ENCODE measurements at regions of chr3 and their contacts with region 1.

Region 1: DNA sequence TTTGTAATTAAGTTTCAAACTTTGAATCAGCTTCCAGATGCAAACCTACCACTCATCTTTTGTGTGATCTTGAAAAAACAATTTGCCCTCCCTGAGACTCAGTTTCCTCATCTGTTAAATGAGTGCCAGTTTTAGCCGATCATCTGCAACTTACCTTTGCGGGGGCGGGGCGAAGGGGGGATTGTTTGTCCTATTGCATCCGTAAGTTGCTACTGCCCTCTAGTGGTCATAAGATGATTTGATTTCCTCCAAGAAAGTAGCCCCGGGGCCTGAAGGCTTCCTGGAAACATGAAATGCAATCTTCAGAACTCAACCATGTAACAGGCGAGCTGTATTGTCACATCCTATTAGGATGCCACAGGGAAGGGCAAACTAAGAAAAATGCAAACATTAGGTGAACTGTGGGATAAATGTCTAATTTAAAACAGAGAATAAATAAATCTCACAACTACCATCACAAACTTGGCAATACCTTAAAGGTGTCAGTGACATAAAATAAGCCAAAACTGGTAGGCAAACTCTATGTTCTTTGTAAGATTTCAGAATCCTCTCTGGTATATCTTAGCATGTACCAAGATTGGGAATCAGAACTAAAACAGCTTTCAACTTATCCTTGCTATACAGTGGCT is 63.5 kb upstream of the CLDN18 start:
- DNase-seq: peak; percentile 57
- H3K4me3 Mint-ChIP-seq: no peak overlapping the region
- H3K27ac Mint-ChIP-seq: no peak overlapping the region
- H3K4me1 Mint-ChIP-seq: no peaks in the 10 kb centered on the region
- H3K27me3 Mint-ChIP-seq: no peaks in the 10 kb centered on the region

Region 2: DNA sequence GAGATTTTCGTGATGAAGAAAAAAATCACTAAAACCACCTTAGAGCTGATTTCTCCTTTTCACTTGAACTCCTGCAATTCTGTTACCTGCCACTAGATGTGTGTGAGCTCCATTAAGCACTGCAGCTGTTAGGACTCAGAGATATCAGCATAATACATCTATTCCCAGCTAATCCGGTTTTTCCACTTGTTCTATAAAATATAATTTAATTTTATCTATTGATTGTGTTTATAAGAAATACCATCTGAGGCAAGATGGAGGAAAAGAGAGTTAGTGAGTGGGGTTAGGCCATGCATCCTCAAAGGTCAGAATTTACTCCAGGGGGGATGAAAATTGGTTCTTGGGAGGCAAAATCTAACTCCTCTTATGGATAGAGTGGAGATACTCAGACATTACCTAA is 836.0 kb before region 1 on chr3:
- CTCF ChIA-PET with region 1: interaction called, 19 read pairs
- POLR2A ChIA-PET with region 1: no interaction called
- intact Hi-C with region 1: loop called (anchors 1 kb)
- DNase-seq: no peak
- H3K4me3 Mint-ChIP-seq: no peak overlapping the region
- H3K27ac Mint-ChIP-seq: no peak overlapping the region
- H3K4me1 Mint-ChIP-seq: no peaks in the 10 kb centered on the region
- H3K27me3 Mint-ChIP-seq: peaks cover 9% of the 10 kb centered on the region

Region 3: DNA sequence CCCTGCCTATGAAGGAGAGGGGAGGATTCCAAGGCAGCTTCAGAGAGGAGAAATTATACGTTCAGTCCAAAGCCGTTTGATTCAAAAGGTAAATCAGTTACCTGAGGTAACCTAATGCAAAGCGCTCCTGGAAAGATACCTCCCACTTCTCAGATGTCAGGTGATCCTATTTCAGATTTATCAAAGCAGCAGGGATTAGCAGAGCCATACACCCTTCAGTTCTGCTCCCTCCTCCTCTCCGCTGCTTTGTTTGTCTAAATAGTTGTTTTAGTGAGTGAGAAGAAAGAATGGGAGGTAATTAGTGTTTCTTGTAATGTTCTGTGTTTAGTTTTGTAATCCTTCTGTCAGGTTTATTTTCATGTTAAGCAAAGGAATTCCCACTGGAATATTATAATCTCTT is 101.3 kb before region 1 on chr3:
- CTCF ChIA-PET with region 1: no interaction called
- POLR2A ChIA-PET with region 1: no interaction called
- intact Hi-C with region 1: no loop called
- DNase-seq: no peak
- H3K4me3 Mint-ChIP-seq: no peak overlapping the region
- H3K27ac Mint-ChIP-seq: no peak overlapping the region
- H3K4me1 Mint-ChIP-seq: no peaks in the 10 kb centered on the region
- H3K27me3 Mint-ChIP-seq: peaks cover 1% of the 10 kb centered on the region

Region 4: DNA sequence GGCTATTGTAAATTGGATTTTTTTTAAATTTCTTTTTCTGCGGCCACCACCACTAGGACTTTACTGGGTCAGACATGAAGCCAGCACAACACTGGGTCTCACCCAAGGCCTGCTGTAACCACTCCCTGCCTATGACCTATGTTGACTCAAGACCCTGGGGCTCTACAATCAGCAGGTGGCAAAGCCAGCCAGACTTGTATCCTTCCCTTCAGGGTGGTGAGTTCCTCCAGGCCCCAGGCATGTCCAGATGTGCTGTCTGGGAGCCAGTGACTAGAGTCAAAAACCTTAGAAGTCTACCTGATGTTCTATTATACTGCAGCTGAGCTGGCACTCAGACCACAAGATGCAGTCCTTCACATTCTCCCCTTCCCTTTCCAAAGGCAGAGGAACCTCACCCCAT is 31.9 kb after region 1 on chr3:
- CTCF ChIA-PET with region 1: no interaction called
- POLR2A ChIA-PET with region 1: no interaction called
- intact Hi-C with region 1: no loop called
- DNase-seq: no peak
- H3K4me3 Mint-ChIP-seq: no peak overlapping the region
- H3K27ac Mint-ChIP-seq: no peak overlapping the region
- H3K4me1 Mint-ChIP-seq: no peaks in the 10 kb centered on the region
- H3K27me3 Mint-ChIP-seq: peaks cover 11% of the 10 kb centered on the region